ENCODE measurements at regions of chr1 and their contacts with region 1.

Region 1: DNA sequence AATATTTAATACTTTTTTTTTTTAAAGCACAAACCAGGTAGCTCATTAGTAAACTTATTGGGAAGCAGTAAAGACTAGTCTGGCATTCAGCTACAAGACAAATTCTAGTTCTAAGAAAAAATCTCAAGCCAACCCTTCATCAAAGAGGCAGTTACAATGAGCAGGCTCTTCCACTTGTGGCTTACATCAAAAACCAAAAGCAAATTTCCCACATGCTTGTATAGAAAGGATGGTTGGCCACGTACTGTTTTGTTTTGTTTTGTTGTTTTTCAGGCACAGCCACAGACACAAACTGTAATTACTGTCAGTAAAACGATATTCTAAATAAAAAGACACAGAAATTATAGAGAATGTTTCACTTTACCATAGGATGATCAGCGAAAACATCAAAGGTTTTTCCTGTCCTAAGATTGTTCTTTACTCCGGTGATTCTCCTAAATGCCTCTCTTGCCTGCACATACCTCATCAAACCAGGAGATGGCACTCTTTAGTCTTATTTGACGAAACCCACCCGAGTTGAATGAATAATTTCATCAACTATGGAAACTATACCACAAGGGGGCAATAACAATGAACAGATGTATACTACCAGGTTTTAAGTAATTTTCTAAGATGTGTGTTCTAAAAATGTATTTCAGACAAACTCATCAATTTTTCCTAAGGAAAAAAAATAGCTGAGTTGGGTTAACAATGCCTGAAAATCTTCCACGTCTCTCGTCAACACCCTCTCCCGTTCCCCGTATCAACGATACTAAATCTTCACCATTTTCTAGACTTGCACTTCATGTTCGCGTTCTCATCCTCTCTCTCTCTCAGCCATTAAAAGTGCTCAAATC is 26.9 kb downstream of the RPL5 start:
- DNase-seq: peak; percentile 78
- ATAC-seq: peak; percentile 85
- H3K4me3 Mint-ChIP-seq: peak overlapping the region; percentile 11
- H3K27ac Mint-ChIP-seq: peak overlapping the region; percentile 62
- H3K4me1 Mint-ChIP-seq: peaks cover 25% of the 10 kb centered on the region
- H3K27me3 Mint-ChIP-seq: no peaks in the 10 kb centered on the region

Region 2: GRCh38 chr1:92843429-92844352 is 15.1 kb before region 1 on chr1:
- CTCF ChIA-PET with region 1: interaction called, 11 read pairs
- POLR2A ChIA-PET with region 1: interaction called, 3 read pairs
- DNase-seq: no peak
- ATAC-seq: no peak
- H3K4me3 Mint-ChIP-seq: no peak overlapping the region
- H3K27ac Mint-ChIP-seq: no peak overlapping the region
- H3K4me1 Mint-ChIP-seq: peaks cover 19% of the 10 kb centered on the region
- H3K27me3 Mint-ChIP-seq: no peaks in the 10 kb centered on the region

Region 3: DNA sequence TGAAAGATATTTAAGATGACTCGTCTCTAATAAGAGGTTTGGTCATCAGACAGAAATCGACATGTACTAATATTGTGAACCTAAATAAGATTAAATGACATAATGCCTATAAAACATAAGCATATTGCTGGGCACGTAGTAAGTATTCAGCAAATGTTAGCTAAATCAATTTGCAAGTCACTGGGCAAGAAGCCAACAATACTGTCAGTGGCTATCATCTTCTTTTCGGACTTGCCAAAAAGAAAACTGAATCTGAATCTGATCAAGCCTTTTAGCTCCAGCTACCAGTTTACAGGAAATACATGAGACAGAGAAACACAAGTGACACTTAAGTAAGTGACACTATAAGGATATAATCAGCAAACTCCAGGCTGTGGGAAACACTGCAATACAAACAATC is 19.0 kb after region 1 on chr1:
- CTCF ChIA-PET with region 1: interaction called, 44 read pairs
- POLR2A ChIA-PET with region 1: no interaction called
- DNase-seq: no peak
- ATAC-seq: peak; percentile 50
- H3K4me3 Mint-ChIP-seq: peak overlapping the region; percentile 13
- H3K27ac Mint-ChIP-seq: peak overlapping the region; percentile 57
- H3K4me1 Mint-ChIP-seq: peaks cover 32% of the 10 kb centered on the region
- H3K27me3 Mint-ChIP-seq: no peaks in the 10 kb centered on the region

Region 4: GRCh38 chr1:92901699-92902405 is 43.1 kb after region 1 on chr1:
- CTCF ChIA-PET with region 1: interaction called, 18 read pairs
- POLR2A ChIA-PET with region 1: no interaction called
- DNase-seq: no peak
- ATAC-seq: no peak
- H3K4me3 Mint-ChIP-seq: no peak overlapping the region
- H3K27ac Mint-ChIP-seq: no peak overlapping the region
- H3K4me1 Mint-ChIP-seq: peaks cover 27% of the 10 kb centered on the region
- H3K27me3 Mint-ChIP-seq: no peaks in the 10 kb centered on the region

Region 5: DNA sequence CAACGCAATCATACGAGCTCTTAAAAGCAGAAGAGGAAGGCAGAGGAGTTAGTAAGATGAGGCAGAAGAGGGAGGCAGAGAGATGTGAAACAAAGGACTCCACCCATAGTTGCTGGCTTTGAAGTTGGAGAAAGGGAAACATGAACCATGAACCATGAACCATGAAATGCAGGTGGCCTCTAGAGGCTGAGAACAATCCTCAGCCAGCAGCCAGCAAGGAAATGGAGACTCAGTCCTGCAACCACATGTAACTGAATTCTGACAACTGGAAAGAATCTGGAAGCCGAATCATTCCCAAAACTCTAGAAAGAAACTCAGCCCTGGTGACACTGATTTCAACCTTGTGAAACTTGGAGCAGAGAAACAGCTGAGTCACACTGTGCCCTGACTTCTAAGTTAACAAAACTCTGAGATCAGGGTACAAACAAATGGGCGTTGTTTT is 92.4 kb after region 1 on chr1:
- CTCF ChIA-PET with region 1: interaction called, 91 read pairs
- POLR2A ChIA-PET with region 1: no interaction called
- DNase-seq: peak; percentile 45
- ATAC-seq: peak; percentile 69
- H3K4me3 Mint-ChIP-seq: no peak overlapping the region
- H3K27ac Mint-ChIP-seq: no peak overlapping the region
- H3K4me1 Mint-ChIP-seq: peaks cover 38% of the 10 kb centered on the region
- H3K27me3 Mint-ChIP-seq: no peaks in the 10 kb centered on the region

Region 6: DNA sequence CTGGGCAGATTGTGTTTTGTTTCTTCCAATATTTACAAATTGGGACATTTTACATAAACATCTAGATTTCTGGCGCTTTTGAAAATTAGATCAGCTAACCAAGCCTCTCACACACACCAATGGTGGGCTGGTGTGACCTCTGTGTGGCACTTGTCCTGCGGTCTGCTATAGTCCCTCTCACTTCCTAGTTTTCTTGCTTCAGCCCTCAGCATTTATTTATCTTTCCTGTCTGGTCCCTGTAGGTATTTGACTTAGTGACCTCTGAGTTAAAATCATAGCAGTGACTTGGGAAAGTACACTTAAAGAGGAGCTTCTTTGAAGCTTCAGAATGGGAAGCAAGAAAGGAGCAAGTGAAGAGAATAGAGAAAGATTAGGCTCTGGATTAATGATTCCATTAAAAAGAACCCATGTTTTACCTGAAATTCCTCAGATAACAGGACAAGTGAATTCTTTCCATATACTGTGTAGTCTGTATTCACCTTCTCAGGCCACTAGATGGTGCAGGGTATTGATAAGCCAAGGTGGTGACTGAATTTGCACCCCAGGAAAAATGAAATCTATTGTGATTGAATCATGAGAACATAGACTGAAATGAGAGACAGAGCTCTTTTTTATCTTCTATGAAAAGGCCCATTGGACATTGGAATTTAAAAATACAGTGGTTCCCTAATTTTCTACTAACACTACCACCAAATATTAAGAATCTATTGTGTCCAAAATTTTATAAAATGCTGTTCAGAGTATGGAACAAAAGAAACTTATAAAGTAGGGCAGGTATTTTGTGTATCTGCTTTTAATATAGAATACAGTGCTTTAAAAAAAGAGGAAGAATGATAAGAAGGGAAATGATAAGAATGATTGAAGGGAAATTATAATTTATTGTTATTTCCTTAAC is 109.6 kb after region 1 on chr1:
- CTCF ChIA-PET with region 1: interaction called, 134 read pairs
- POLR2A ChIA-PET with region 1: no interaction called
- DNase-seq: peak; percentile 59
- ATAC-seq: peak; percentile 60
- H3K4me3 Mint-ChIP-seq: no peak overlapping the region
- H3K27ac Mint-ChIP-seq: no peak overlapping the region
- H3K4me1 Mint-ChIP-seq: peaks cover 39% of the 10 kb centered on the region
- H3K27me3 Mint-ChIP-seq: no peaks in the 10 kb centered on the region

Region 7: DNA sequence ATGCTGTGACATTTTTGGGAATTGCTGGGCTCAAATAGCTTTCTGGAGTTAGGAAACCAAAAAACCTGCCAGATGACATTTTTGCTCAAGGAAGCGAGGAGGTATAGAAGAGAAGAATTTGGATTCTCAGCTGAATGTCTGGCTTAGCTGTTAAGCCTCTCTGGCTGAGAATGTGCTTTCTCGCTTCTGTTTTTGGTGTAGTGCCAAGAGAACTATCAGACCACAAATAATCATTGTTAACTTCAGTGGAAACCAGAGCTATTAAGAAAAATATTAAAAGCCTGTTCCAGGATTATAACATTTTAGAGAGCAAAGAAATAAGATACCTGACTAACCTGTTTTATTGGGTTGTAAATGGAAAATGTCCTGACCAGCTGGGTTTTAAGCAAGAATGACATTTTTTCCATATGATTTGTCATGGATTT is 142.0 kb after region 1 on chr1:
- CTCF ChIA-PET with region 1: interaction called, 11 read pairs
- POLR2A ChIA-PET with region 1: interaction called, 3 read pairs
- DNase-seq: no peak
- ATAC-seq: no peak
- H3K4me3 Mint-ChIP-seq: no peak overlapping the region
- H3K27ac Mint-ChIP-seq: no peak overlapping the region
- H3K4me1 Mint-ChIP-seq: no peaks in the 10 kb centered on the region
- H3K27me3 Mint-ChIP-seq: peaks cover 29% of the 10 kb centered on the region